ENCODE measurements at regions of chr5 and their contacts with region 1.

Region 1: GRCh38 chr5:112737463-112738190 is at the start of gene APC:
- DNase-seq: peak; percentile 46
- ATAC-seq: peak; percentile 99
- H3K4me3 ChIP-seq: peak within 1 kb of the TSS; percentile 99
- H3K27ac ChIP-seq: peak within 1 kb of the TSS; percentile 76
- H3K4me1 ChIP-seq: no peaks in the 10 kb centered on the region
- H3K27me3 ChIP-seq: no peaks in the 10 kb centered on the region
- CTCF ChIP-seq: no peak
- EP300 ChIP-seq: no peak
- POLR2A ChIP-seq: peak; percentile 86
- RAD21 ChIP-seq: no peak
- polyA plus RNA-seq, gene APC: 3.2 to 7.2 TPM

Region 2: GRCh38 chr5:111537141-111538024 is 1200.2 kb before region 1 on chr5:
- CTCF ChIA-PET with region 1: no interaction called
- POLR2A ChIA-PET with region 1: no interaction called
- RAD21 ChIA-PET with region 1: no interaction called
- SMC1A ChIA-PET with region 1: no interaction called
- in situ Hi-C with region 1: no loop called
- intact Hi-C with region 1: no loop called
- DNase-seq: no peak
- ATAC-seq: no peak
- H3K4me3 ChIP-seq: no peak overlapping the region
- H3K27ac ChIP-seq: no peak overlapping the region
- H3K4me1 ChIP-seq: no peaks in the 10 kb centered on the region
- H3K27me3 ChIP-seq: no peaks in the 10 kb centered on the region
- CTCF ChIP-seq: no peak
- EP300 ChIP-seq: no peak
- POLR2A ChIP-seq: no peak
- RAD21 ChIP-seq: no peak

Region 3: GRCh38 chr5:112669328-112669963 is 68.2 kb before region 1 on chr5:
- CTCF ChIA-PET with region 1: no interaction called
- POLR2A ChIA-PET with region 1: no interaction called
- RAD21 ChIA-PET with region 1: no interaction called
- SMC1A ChIA-PET with region 1: no interaction called
- in situ Hi-C with region 1: no loop called
- intact Hi-C with region 1: no loop called
- DNase-seq: no peak
- ATAC-seq: peak; percentile 56
- H3K4me3 ChIP-seq: no peak overlapping the region
- H3K27ac ChIP-seq: no peak overlapping the region
- H3K4me1 ChIP-seq: no peaks in the 10 kb centered on the region
- H3K27me3 ChIP-seq: no peaks in the 10 kb centered on the region; a peak in 1 of 4 replicates
- CTCF ChIP-seq: no peak
- EP300 ChIP-seq: no peak
- POLR2A ChIP-seq: no peak
- RAD21 ChIP-seq: no peak

Region 4: GRCh38 chr5:112691758-112692157 is 45.9 kb before region 1 on chr5:
- CTCF ChIA-PET with region 1: interaction called, 3 read pairs
- POLR2A ChIA-PET with region 1: interaction called, 3 read pairs
- RAD21 ChIA-PET with region 1: interaction called, 3 read pairs
- SMC1A ChIA-PET with region 1: interaction called, 12 read pairs
- in situ Hi-C with region 1: no loop called
- intact Hi-C with region 1: no loop called
- DNase-seq: peak; percentile 19
- ATAC-seq: peak; percentile 89
- H3K4me3 ChIP-seq: no peak overlapping the region
- H3K27ac ChIP-seq: no peak overlapping the region
- H3K4me1 ChIP-seq: peaks cover 9% of the 10 kb centered on the region
- H3K27me3 ChIP-seq: peaks cover 0 to 1% of the 10 kb centered on the region in 2 experiments; a peak in 2 of 4 replicates
- CTCF ChIP-seq: peak; percentile 46 to 56 (median 50); a peak in 4 of 6 replicates
- EP300 ChIP-seq: no peak
- POLR2A ChIP-seq: no peak
- RAD21 ChIP-seq: peak; percentile 79

Region 5: DNA sequence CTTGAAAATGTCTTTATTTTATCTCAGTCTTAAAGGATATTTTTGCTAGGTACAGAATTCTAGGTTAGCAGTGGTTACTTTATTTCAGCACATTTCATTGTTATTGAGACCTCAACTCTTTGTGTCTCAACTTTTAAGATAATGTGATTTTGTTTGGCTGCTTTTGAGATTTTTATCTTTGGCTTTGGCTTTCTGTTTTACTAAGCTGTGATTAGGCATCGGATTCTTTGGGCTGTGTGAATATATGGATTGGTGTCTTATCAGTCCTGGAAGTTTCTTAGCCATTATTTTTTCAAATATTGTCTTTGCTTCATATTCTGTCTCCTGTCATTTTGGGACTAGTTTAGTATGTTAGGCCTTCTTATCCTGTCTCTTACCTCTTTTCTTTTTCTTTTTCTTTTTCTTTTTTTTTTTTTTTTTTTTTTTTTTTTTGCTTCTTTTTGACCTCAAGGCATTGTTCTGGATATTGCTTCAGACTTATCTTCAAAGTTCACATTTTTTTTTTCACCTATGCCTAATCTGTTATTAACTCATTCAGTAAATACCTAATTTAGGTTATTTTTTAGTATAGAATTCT is 20.0 kb before region 1 on chr5:
- CTCF ChIA-PET with region 1: interaction called, 4 read pairs
- POLR2A ChIA-PET with region 1: interaction called, 5 read pairs
- RAD21 ChIA-PET with region 1: no interaction called
- SMC1A ChIA-PET with region 1: interaction called, 11 read pairs
- in situ Hi-C with region 1: no loop called
- intact Hi-C with region 1: no loop called
- DNase-seq: no peak
- ATAC-seq: no peak
- H3K4me3 ChIP-seq: no peak overlapping the region
- H3K27ac ChIP-seq: no peak overlapping the region
- H3K4me1 ChIP-seq: no peaks in the 10 kb centered on the region
- H3K27me3 ChIP-seq: no peaks in the 10 kb centered on the region
- CTCF ChIP-seq: no peak
- EP300 ChIP-seq: no peak
- POLR2A ChIP-seq: no peak
- RAD21 ChIP-seq: no peak